IMR-90 (cell line): ENCODE measurements at regions of chr17 and their contacts with region 1.

Region 1: DNA sequence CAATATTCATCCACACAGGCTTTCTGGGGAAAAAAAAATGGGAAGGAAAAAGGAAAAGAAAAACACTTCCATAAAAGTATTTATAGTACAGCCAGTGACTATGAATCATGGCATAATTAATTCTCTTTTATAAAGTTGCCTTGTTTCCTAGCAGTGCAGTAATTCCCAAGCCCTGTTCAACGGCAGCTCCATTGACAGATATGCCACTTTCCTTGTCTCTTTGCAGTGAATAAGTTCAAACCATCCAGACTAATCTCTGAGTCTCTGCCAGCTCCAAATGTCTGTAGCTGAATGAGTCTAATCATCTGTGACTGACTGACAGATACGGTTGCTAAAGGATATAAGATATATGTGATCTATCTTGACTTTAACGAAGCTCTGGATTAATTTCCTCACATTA is 52.9 kb upstream of the KCNJ16 start:
- DNase-seq: peak; percentile 11
- ATAC-seq: peak; percentile 42
- H3K4me3 ChIP-seq: no peak overlapping the region
- H3K27ac ChIP-seq: no peak overlapping the region
- H3K4me1 ChIP-seq: peaks cover 5% of the 10 kb centered on the region
- H3K27me3 ChIP-seq: no peaks in the 10 kb centered on the region
- CTCF ChIP-seq: no peak
- POLR2A ChIP-seq: no peak
- RAD21 ChIP-seq: no peak

Region 2: DNA sequence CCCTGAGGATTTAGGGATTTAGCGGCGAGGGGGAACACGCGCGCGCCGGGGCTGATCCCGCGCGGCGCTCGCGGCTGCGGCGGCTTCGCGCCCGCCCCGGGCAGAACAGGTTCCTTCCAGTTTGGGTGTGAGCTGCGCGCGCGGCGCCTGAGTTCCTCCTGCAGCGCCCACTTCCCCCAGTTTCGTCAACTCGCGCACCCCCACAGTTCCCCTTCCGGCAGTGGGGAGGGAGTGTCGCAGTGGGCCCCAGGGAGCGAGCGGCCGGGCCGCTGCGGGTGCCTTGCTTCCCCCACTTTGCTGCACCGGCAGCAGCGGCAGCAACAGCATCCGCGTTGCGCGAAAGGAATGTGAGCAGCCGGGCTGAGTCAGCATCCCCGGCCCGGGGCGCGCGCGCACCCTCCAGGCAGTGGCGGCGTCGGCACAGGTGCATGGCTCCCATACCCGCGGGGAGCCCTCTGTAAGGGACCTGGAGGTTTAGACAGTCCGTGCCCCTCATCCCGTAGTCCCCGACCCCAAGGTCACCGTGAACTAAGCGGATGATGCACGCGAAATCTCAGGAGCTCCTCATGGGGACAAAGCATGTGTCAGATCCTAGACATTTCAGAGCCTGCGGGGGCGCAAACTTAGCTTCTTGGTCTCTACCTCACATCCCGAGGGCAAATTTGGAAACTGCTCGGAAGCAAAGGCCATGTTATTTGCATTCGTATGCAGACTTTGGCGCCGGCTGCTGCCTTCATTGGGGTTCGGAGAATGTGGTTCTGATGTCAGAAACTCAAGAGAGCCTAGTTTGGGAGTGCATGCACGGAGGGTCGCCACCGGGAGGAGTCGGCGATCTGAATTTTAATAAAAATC is 1730.1 kb before region 1 on chr17:
- CTCF ChIA-PET with region 1: no interaction called
- POLR2A ChIA-PET with region 1: interaction called, 13 read pairs
- dilution Hi-C with region 1: no loop called
- in situ Hi-C with region 1: no loop called
- intact Hi-C with region 1: no loop called
- DNase-seq: peak; percentile 68
- ATAC-seq: peak; percentile 88
- H3K4me3 ChIP-seq: peak overlapping the region; percentile 85
- H3K27ac ChIP-seq: no peak overlapping the region; the same call in 1 of the 2 replicates
- H3K4me1 ChIP-seq: peaks cover 5% of the 10 kb centered on the region
- H3K27me3 ChIP-seq: peaks cover 22% of the 10 kb centered on the region
- CTCF ChIP-seq: 0 out of 2 replicates have a peak, but pooled peaks have one; percentile 14
- POLR2A ChIP-seq: peak; percentile 30; the same call in 1 of the 2 replicates
- RAD21 ChIP-seq: no peak

Region 3: GRCh38 chr17:71142333-71142732 is 1120.2 kb after region 1 on chr17:
- CTCF ChIA-PET with region 1: no interaction called
- POLR2A ChIA-PET with region 1: interaction called, 14 read pairs
- dilution Hi-C with region 1: no loop called
- in situ Hi-C with region 1: no loop called
- intact Hi-C with region 1: no loop called
- DNase-seq: peak; percentile 10
- ATAC-seq: peak; percentile 48; the same call in 1 of the 2 replicates
- H3K4me3 ChIP-seq: no peak overlapping the region
- H3K27ac ChIP-seq: no peak overlapping the region
- H3K4me1 ChIP-seq: peaks cover 1% of the 10 kb centered on the region; the same call in 1 of the 2 replicates
- H3K27me3 ChIP-seq: no peaks in the 10 kb centered on the region
- CTCF ChIP-seq: no peak
- POLR2A ChIP-seq: no peak
- RAD21 ChIP-seq: no peak